ENCODE measurements at regions of chr4 and their contacts with region 1.

Region 1: GRCh38 chr4:121192480-121192879 is 28.4 kb upstream of the TNIP3 start:
- DNase-seq: peak in 3 of 9 experiments; percentile 13 to 76 (median 64)
- ATAC-seq: no peak
- H3K4me3 ChIP-seq: no peak overlapping the region
- H3K4me3 Mint-ChIP-seq: peak overlapping the region; percentile 62
- H3K27ac ChIP-seq: no peak overlapping the region
- H3K27ac Mint-ChIP-seq: peak overlapping the region; percentile 32
- H3K4me1 ChIP-seq: peaks cover 45% of the 10 kb centered on the region
- H3K4me1 Mint-ChIP-seq: peaks cover 56% of the 10 kb centered on the region
- H3K27me3 ChIP-seq: no peaks in the 10 kb centered on the region
- H3K27me3 Mint-ChIP-seq: no peaks in the 10 kb centered on the region
- CTCF ChIP-seq: peak; percentile 97

Region 2: GRCh38 chr4:120037411-120037810 is 1155.1 kb before region 1 on chr4:
- CTCF ChIA-PET with region 1: no interaction called
- POLR2A ChIA-PET with region 1: no interaction called
- intact Hi-C with region 1: no loop called
- DNase-seq: no peak
- ATAC-seq: no peak
- H3K4me3 ChIP-seq: no peak overlapping the region
- H3K4me3 Mint-ChIP-seq: no peak overlapping the region
- H3K27ac ChIP-seq: no peak overlapping the region
- H3K27ac Mint-ChIP-seq: no peak overlapping the region
- H3K4me1 ChIP-seq: no peaks in the 10 kb centered on the region
- H3K4me1 Mint-ChIP-seq: no peaks in the 10 kb centered on the region
- H3K27me3 ChIP-seq: no peaks in the 10 kb centered on the region
- H3K27me3 Mint-ChIP-seq: peaks cover 19% of the 10 kb centered on the region
- CTCF ChIP-seq: no peak

Region 3: GRCh38 chr4:120156120-120156718 is 1036.3 kb before region 1 on chr4:
- CTCF ChIA-PET with region 1: interaction called, 12 read pairs
- POLR2A ChIA-PET with region 1: no interaction called
- intact Hi-C with region 1: loop called in 1 of 2 experiments (anchors 5 kb)
- DNase-seq: peak in 4 of 9 experiments; percentile 17 to 80 (median 54)
- ATAC-seq: peak; percentile 46
- H3K4me3 ChIP-seq: no peak overlapping the region
- H3K4me3 Mint-ChIP-seq: no peak overlapping the region
- H3K27ac ChIP-seq: no peak overlapping the region
- H3K27ac Mint-ChIP-seq: no peak overlapping the region
- H3K4me1 ChIP-seq: no peaks in the 10 kb centered on the region
- H3K4me1 Mint-ChIP-seq: no peaks in the 10 kb centered on the region
- H3K27me3 ChIP-seq: no peaks in the 10 kb centered on the region
- H3K27me3 Mint-ChIP-seq: no peaks in the 10 kb centered on the region
- CTCF ChIP-seq: peak; percentile 74

Region 4: DNA sequence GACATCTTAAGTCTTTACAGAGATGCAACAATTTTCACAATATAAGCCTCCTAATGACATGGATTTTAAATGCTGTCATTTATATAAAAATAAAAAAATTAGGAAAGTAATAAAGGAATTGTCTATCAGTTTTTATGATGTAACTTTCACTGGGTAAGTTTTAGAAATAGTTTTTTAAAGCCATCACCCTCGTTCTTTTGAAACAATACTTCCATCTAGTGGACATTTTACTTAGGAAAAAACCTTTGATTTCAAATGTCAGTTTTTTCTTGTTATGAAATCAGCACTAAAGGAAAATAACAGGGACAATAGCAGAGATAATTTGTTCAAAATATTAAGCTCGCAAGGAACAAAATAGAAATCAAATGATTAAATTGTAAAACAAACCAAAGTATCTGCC is 95.9 kb before region 1 on chr4:
- CTCF ChIA-PET with region 1: interaction called, 10 read pairs
- POLR2A ChIA-PET with region 1: no interaction called
- intact Hi-C with region 1: no loop called
- DNase-seq: peak in 2 of 9 experiments; percentile 20 to 52
- ATAC-seq: no peak
- H3K4me3 ChIP-seq: no peak overlapping the region
- H3K4me3 Mint-ChIP-seq: no peak overlapping the region
- H3K27ac ChIP-seq: no peak overlapping the region
- H3K27ac Mint-ChIP-seq: no peak overlapping the region
- H3K4me1 ChIP-seq: no peaks in the 10 kb centered on the region
- H3K4me1 Mint-ChIP-seq: peaks cover 2% of the 10 kb centered on the region
- H3K27me3 ChIP-seq: no peaks in the 10 kb centered on the region
- H3K27me3 Mint-ChIP-seq: no peaks in the 10 kb centered on the region
- CTCF ChIP-seq: peak; percentile 77

Region 5: DNA sequence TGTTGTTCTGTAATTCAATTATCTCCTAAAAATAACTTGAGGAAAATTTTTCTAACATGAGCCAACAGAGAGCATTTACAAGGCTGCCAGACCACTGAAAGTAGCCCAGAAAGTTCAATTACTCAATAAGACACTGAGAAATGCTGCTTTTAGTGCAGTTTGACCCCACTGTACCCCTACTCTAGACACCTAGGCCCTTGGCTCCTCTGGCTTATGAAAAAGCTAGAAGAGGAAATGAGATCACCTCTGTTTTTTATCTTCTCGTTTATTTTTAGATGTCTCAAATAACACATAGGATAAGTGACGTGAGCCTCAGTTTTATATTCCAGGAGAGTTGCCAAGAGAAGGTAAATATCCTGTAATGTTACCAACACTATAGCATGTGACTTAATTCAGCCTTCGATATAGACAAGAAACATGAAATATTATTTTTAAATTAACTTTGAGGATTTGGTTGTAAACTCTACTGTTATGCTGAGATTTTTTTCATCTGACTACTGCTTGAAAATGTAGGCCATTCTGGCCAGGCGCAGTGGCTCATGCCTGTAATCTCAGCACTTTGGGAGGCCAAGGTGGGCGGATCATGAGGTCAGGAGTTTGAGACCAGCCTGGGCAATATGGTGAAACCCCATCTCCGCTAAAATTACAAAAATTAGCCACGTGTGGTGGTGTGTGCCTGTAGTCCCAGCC is 52.8 kb before region 1 on chr4:
- CTCF ChIA-PET with region 1: interaction called, 13 read pairs
- POLR2A ChIA-PET with region 1: no interaction called
- intact Hi-C with region 1: no loop called
- DNase-seq: peak in 2 of 9 experiments; percentile 27 to 68
- ATAC-seq: peak; percentile 78
- H3K4me3 ChIP-seq: no peak overlapping the region
- H3K4me3 Mint-ChIP-seq: peak overlapping the region; percentile 3
- H3K27ac ChIP-seq: peak overlapping the region; percentile 65 to 72
- H3K27ac Mint-ChIP-seq: peak overlapping the region; percentile 88
- H3K4me1 ChIP-seq: peaks cover 35% of the 10 kb centered on the region
- H3K4me1 Mint-ChIP-seq: peaks cover 50% of the 10 kb centered on the region
- H3K27me3 ChIP-seq: no peaks in the 10 kb centered on the region
- H3K27me3 Mint-ChIP-seq: no peaks in the 10 kb centered on the region
- CTCF ChIP-seq: no peak

Region 6: GRCh38 chr4:121176082-121176934 is 16.2 kb before region 1 on chr4:
- CTCF ChIA-PET with region 1: interaction called, 14 read pairs
- POLR2A ChIA-PET with region 1: interaction called, 4 read pairs
- intact Hi-C with region 1: loop called in 1 of 2 experiments (anchors 1 kb)
- DNase-seq: no peak
- ATAC-seq: no peak
- H3K4me3 ChIP-seq: no peak overlapping the region
- H3K4me3 Mint-ChIP-seq: peak overlapping the region; percentile 19
- H3K27ac ChIP-seq: no peak overlapping the region
- H3K27ac Mint-ChIP-seq: no peak overlapping the region
- H3K4me1 ChIP-seq: peaks cover 70% of the 10 kb centered on the region
- H3K4me1 Mint-ChIP-seq: peaks cover 84% of the 10 kb centered on the region
- H3K27me3 ChIP-seq: no peaks in the 10 kb centered on the region
- H3K27me3 Mint-ChIP-seq: no peaks in the 10 kb centered on the region
- CTCF ChIP-seq: no peak

Region 7: DNA sequence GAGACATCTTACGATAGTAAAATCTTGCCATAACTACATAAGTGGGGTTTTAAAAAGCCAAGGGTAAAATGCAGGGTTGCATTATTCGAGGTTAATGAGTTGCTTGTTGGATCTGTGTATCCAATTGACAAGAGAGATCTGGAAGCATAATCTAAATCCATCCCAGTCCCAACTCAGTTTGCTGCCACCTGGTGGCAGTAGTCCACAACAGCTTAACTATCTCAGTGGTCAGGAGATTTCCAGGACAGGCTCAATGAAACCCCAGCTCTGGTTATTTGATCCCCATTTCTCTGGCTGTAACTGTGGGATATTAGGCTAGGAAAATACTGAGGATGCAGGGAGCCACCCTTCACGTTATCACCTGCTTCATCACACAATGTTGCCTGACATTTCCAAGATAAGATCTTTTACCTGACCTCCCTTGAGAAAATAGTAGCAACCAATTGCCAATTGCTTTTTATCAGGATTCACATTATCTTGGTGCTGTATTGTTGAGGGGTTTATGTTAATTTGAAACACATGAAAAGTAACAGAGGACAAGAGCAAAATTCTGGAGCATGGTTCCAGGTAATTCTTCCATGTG is 59.8 kb after region 1 on chr4:
- CTCF ChIA-PET with region 1: interaction called, 97 read pairs
- POLR2A ChIA-PET with region 1: interaction called, 5 read pairs
- intact Hi-C with region 1: loop called (anchors 1 kb)
- DNase-seq: peak in 8 of 9 experiments; percentile 30 to 80 (median 62)
- ATAC-seq: no peak
- H3K4me3 ChIP-seq: no peak overlapping the region
- H3K4me3 Mint-ChIP-seq: no peak overlapping the region
- H3K27ac ChIP-seq: peak overlapping the region in 1 of 2 experiments; percentile 95
- H3K27ac Mint-ChIP-seq: peak overlapping the region; percentile 55
- H3K4me1 ChIP-seq: peaks cover 36% of the 10 kb centered on the region
- H3K4me1 Mint-ChIP-seq: peaks cover 59% of the 10 kb centered on the region
- H3K27me3 ChIP-seq: no peaks in the 10 kb centered on the region
- H3K27me3 Mint-ChIP-seq: no peaks in the 10 kb centered on the region
- CTCF ChIP-seq: peak; percentile 85

Region 8: GRCh38 chr4:121800961-121801714 is 608.7 kb after region 1 on chr4 and contains the start of gene EXOSC9:
- CTCF ChIA-PET with region 1: no interaction called
- POLR2A ChIA-PET with region 1: no interaction called
- intact Hi-C with region 1: loop called (anchors 5 to 10 kb)
- DNase-seq: peak; percentile 91 to 98 (median 95)
- ATAC-seq: peak; percentile 83
- H3K4me3 ChIP-seq: peak within 1 kb of the TSS; percentile 83 to 88
- H3K4me3 Mint-ChIP-seq: peak within 1 kb of the TSS; percentile 89
- H3K27ac ChIP-seq: peak within 1 kb of the TSS; percentile 90 to 93
- H3K27ac Mint-ChIP-seq: peak within 1 kb of the TSS; percentile 99
- H3K4me1 ChIP-seq: peaks cover 31% of the 10 kb centered on the region
- H3K4me1 Mint-ChIP-seq: peaks cover 40% of the 10 kb centered on the region
- H3K27me3 ChIP-seq: no peaks in the 10 kb centered on the region
- H3K27me3 Mint-ChIP-seq: no peaks in the 10 kb centered on the region
- CTCF ChIP-seq: no peak
- total RNA-seq, gene EXOSC9: 76.9 to 80.5 TPM

Region 9: DNA sequence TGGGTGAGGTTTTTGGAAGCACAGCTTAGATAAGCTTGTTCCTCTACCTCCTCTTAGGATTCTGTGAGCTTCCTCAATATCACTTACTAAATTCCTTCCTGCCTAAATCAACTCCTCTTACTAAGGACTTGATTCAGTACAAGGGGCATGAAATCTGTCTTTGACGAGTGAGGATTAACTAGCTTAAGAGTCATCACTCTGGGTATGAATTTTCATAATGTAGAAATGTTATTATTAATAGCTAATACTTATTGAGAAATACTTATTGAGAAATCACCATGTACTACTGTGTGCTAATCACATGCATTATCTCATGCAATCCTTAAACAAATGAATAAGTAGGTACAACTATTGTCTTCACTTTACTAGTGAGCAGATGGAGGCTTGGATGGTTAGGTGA is 730.8 kb after region 1 on chr4:
- CTCF ChIA-PET with region 1: no interaction called
- POLR2A ChIA-PET with region 1: no interaction called
- intact Hi-C with region 1: no loop called
- DNase-seq: no peak
- ATAC-seq: no peak
- H3K4me3 ChIP-seq: no peak overlapping the region
- H3K4me3 Mint-ChIP-seq: no peak overlapping the region
- H3K27ac ChIP-seq: no peak overlapping the region
- H3K27ac Mint-ChIP-seq: no peak overlapping the region
- H3K4me1 ChIP-seq: no peaks in the 10 kb centered on the region
- H3K4me1 Mint-ChIP-seq: no peaks in the 10 kb centered on the region
- H3K27me3 ChIP-seq: no peaks in the 10 kb centered on the region
- H3K27me3 Mint-ChIP-seq: peaks cover 15% of the 10 kb centered on the region
- CTCF ChIP-seq: no peak

Measured in CD8-positive, alpha-beta T cell (primary cell).